Activated naive CD4-positive, alpha-beta T cell treated with anti-CD3 and anti-CD28 coated beads for 36 hours (primary cell): ENCODE measurements at regions of chr10 and their contacts with region 1.

Region 1: DNA sequence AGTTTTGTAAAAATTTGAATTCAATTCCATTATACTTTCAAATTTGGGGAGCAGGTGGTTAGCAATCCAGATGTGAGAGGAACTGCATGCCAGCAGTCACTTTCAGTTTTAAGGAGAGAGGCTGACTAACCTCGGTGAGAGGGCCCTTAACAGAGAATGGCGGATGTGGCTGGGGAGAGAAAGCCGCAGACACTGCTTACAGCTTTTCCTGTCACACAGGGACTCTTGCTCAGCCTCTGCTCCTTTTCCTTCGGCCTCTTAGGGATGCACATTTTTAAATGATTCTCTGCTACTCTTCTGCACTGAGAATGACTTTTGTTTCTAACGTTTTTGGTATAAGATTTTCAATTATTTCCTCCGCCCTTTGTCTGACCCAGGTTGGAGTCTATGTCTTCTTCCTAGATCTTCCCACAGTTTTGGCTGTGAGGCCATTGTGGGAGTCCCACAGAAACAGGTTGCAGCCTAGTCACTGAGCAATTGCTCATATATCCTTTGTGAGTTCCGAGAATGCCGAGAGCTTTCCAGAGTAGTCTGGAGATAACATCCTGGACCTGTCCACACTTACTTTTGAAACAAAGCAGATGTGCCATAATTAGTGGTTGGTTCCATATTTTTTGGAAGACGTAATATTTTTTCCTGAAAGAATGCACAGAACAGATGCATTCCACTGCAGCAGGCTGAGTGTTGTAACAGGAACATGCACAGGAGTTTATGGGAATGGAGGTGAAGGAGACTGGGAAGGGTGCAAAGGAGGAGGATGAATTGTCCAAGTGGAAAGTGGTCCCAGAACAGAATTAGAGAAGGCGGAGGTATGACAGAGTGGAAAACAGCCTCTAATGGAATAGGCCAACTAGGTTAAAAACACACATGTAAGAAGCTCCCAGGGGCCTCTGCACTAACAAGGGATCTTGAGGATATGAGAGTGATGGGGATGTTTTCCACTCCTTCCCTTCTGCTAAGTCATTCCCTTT is 168.0 kb upstream of the ZNF32 start:
- DNase-seq: peak; percentile 93
- H3K4me3 Mint-ChIP-seq: peak overlapping the region; percentile 8
- H3K27ac Mint-ChIP-seq: peak overlapping the region; percentile 57
- H3K4me1 Mint-ChIP-seq: peaks cover 37% of the 10 kb centered on the region
- H3K27me3 Mint-ChIP-seq: no peaks in the 10 kb centered on the region

Region 2: DNA sequence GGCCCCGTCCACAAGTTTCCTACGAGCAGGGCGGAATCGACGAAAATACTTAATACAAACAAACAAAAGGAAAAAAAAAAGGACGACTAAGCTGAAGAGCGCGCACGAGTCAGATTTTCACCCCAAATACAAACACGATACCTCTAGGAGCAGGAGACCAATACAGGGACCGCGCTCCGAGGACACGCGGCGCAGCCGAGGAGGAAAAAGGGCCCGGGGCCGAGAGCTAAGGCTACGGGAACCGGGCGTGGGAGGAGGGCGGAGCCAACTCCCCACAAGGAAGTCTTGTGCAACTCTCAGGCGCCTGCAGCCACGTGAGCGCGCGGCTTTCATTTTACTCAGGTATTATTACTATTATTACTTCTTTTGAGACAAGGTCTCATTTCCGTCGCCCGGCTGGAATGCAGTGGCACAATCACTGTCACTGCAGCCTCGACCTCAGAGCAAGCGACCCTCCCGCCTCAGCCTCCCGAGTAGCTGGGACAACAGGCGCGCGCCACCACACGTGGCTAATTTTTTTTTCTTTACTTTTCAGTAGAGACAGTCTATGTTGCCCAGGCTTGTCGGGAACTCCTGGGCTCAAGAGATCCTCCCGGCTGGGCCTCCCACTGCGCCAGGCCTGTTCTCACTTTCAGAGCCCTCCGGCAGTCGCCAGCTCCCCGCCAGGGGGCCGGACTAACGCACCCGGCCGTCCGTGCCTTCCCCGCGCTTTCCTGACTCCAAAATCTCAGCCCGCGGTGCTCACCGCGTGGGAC is 408.9 kb before region 1 on chr10:
- CTCF ChIA-PET with region 1: no interaction called
- intact Hi-C with region 1: loop called (anchors 10 kb)
- DNase-seq: peak; percentile 94
- H3K4me3 Mint-ChIP-seq: peak overlapping the region; percentile 88
- H3K27ac Mint-ChIP-seq: peak overlapping the region; percentile 96
- H3K4me1 Mint-ChIP-seq: peaks cover 32% of the 10 kb centered on the region
- H3K27me3 Mint-ChIP-seq: no peaks in the 10 kb centered on the region

Region 3: DNA sequence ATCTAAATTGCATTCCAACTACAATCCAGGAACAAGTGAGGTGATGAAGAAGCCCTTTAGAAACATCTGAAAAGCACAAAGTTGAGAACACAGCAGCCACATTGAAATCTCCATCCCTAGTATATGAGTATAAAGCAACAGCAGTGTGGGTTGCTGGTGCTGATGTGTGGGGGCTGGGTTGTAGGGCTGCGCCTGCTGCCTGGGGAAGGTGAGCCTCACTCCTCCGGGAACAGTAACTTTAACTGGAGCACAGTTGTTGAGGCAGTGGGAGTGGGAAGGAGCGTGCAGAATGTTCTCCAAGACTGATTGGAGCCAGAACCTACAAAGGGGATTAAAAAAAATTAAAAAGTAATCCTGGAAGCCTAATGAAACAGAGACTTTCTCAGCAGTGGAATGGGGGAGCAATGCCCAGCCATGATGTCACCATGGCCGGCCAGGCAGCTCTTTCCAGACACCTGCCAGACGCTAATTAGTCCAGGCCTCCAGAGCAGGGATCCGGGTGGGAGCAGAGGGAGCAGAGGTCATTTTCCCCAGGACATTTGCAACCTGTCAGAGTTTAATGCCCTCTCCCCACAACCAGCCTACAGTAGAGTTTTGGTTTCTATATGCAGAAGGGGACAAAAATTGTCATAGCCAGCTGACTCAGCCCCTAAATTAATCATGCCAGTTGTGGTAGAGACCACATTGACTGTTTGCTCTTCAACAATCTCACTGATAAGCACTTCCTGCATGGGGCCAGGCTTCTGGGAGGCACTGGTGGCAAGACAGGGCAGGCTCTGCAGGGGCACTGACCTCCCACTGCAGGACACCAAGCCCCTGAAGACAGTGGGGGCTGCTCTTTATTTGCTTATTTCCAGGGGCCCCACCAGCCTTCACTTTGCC is 34.9 kb before region 1 on chr10:
- CTCF ChIA-PET with region 1: no interaction called
- intact Hi-C with region 1: loop called (anchors 1 kb)
- DNase-seq: peak; percentile 49
- H3K4me3 Mint-ChIP-seq: no peak overlapping the region
- H3K27ac Mint-ChIP-seq: no peak overlapping the region
- H3K4me1 Mint-ChIP-seq: peaks cover 20% of the 10 kb centered on the region
- H3K27me3 Mint-ChIP-seq: no peaks in the 10 kb centered on the region

Region 4: DNA sequence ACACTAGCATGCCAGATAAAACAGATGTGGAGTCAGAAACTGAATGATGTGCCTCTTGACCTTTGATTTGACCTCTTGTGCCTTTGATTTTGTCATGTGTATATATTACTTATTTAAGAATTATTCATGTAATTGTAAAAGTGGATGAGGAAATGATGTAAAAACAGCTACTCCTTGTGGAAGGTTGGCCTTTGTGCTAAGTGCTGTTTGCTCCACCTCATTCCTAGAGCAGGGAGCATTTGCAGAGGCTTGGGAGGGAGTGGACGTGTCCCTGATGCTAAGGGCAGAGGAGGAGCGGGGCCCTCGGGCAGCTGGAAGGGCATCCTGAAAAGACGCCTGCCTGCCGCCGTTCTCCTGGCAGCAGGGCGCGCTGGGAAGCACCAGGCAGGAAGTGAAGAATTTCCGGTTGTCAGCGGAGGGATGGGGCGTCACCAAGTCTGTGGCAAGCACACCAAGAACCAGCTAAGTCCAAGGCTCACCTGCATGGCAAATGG is 29.6 kb after region 1 on chr10:
- CTCF ChIA-PET with region 1: no interaction called
- intact Hi-C with region 1: loop called (anchors 2 kb)
- DNase-seq: peak; percentile 74
- H3K4me3 Mint-ChIP-seq: peak overlapping the region; percentile 58
- H3K27ac Mint-ChIP-seq: peak overlapping the region; percentile 74
- H3K4me1 Mint-ChIP-seq: peaks cover 18% of the 10 kb centered on the region
- H3K27me3 Mint-ChIP-seq: no peaks in the 10 kb centered on the region

Region 5: GRCh38 chr10:44959247-44960087 is 1142.8 kb after region 1 on chr10 and contains the start of gene RASSF4:
- CTCF ChIA-PET with region 1: no interaction called
- intact Hi-C with region 1: loop called (anchors 10 kb)
- DNase-seq: peak; percentile 94
- H3K4me3 Mint-ChIP-seq: peak within 1 kb of the TSS; percentile 80
- H3K27ac Mint-ChIP-seq: peak within 1 kb of the TSS; percentile 48
- H3K4me1 Mint-ChIP-seq: peaks cover 18% of the 10 kb centered on the region
- H3K27me3 Mint-ChIP-seq: no peaks in the 10 kb centered on the region
- total RNA-seq, gene RASSF4: 1.1 to 2.2 TPM